Esophagus muscularis mucosa (tissue), 4 donors: ENCODE measurements at regions of chr6 and their contacts with region 1.

Region 1: GRCh38 chr6:74870403-74870802 is 335.4 kb downstream of the COL12A1 start:
- DNase-seq: no peak
- H3K4me3 ChIP-seq: no peak overlapping the region
- H3K27ac ChIP-seq: peak overlapping the region in 2 of 4 donors; percentile 3 to 38
- H3K4me1 ChIP-seq: peaks cover 0 to 29% (median 21%) of the 10 kb centered on the region in 4 donors
- H3K27me3 ChIP-seq: no peaks in the 10 kb centered on the region
- CTCF ChIP-seq: peak in 1 of 3 experiments; percentile 36
- EP300 ChIP-seq: peak; percentile 5
- POLR2A ChIP-seq: no peak

Region 2: DNA sequence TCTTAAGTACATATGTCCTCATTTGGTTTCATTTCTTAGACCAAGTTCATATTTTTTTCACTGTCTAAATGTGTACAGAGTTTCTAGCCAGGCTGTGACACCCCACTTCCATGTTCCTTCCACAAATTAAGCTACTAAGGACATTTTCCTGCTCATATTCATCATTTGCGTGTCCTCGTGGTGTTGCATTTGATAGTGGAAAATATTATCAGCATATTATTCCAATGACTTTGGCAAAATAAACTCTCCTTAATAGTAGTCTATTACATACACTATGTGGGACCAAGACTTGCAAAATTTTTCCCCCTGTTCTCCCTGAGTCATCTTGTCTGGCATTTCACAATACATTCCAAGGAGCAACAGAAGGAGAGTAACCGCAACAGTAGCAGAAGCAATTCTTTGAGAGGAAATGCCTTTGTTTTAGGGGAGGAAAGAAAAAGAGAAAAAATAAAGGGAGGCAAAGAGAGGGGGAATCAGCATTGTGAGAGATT is 263.8 kb before region 1 on chr6:
- intact Hi-C with region 1: loop called (anchors 10 kb)
- DNase-seq: no peak
- H3K4me3 ChIP-seq: peak overlapping the region in 1 of 4 donors; percentile 8
- H3K27ac ChIP-seq: peak overlapping the region; percentile 75 to 79 (median 76)
- H3K4me1 ChIP-seq: peaks cover 0 to 54% (median 50%) of the 10 kb centered on the region in 4 donors
- H3K27me3 ChIP-seq: no peaks in the 10 kb centered on the region
- CTCF ChIP-seq: no peak
- EP300 ChIP-seq: no peak
- POLR2A ChIP-seq: no peak

Region 3: DNA sequence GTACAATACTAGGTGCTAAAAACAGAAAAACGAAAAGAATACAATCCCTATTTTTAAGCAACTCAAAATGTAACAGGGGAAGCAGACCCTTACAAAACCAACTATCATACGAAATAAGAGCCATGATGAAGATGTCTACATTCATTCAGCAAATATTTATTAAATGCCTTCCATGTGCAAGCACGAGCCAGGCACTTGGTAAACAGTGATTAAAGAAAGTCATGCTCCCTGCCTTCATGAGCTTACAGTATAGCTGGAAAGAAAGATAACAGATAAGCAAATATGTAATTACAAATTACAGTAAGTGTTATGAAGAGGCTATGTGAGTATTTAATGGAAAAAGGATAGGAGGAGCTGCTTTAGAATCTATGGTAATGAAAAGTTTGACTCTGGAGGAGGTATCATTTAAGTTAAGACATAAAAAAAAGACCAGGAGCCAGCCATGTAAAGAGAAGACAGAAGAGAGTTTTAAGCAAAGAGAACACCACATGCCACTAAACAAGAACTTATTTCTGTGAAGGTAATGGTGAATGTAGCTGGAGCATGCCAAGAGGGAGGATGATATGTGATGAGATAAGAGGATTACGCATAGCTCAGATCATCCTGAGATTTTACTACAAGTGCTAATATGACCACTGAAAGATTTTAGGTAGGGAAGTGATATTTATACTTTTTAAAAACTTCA is 392.5 kb after region 1 on chr6:
- intact Hi-C with region 1: no loop called
- DNase-seq: no peak
- H3K4me3 ChIP-seq: no peak overlapping the region
- H3K27ac ChIP-seq: no peak overlapping the region
- H3K4me1 ChIP-seq: peaks cover 10 to 21% (median 14%) of the 10 kb centered on the region in 4 donors
- H3K27me3 ChIP-seq: no peaks in the 10 kb centered on the region
- CTCF ChIP-seq: no peak
- EP300 ChIP-seq: no peak
- POLR2A ChIP-seq: no peak